Caco-2 (cell line): ENCODE measurements at regions of chr3 and their contacts with region 1.

Region 1: GRCh38 chr3:87350364-87351199 is 74.2 kb upstream of the POU1F1 start:
- DNase-seq: peak; percentile 22 to 36
- H3K4me3 ChIP-seq: no peak overlapping the region
- H3K4me3 Mint-ChIP-seq: no peak overlapping the region
- H3K27ac Mint-ChIP-seq: no peak overlapping the region
- H3K4me1 ChIP-seq: peaks cover 8% of the 10 kb centered on the region; the same call in 1 of the 2 replicates
- H3K4me1 Mint-ChIP-seq: peaks cover 7% of the 10 kb centered on the region
- H3K27me3 ChIP-seq: no peaks in the 10 kb centered on the region
- H3K27me3 Mint-ChIP-seq: no peaks in the 10 kb centered on the region
- CTCF ChIP-seq: peak; percentile 77 to 80

Region 2: GRCh38 chr3:87318617-87319021 is 32.0 kb before region 1 on chr3:
- CTCF ChIA-PET with region 1: no interaction called
- POLR2A ChIA-PET with region 1: no interaction called
- intact Hi-C with region 1: loop called (anchors 5 kb)
- DNase-seq: no peak
- H3K4me3 ChIP-seq: no peak overlapping the region
- H3K4me3 Mint-ChIP-seq: peak overlapping the region; percentile 37
- H3K27ac Mint-ChIP-seq: peak overlapping the region; percentile 61
- H3K4me1 ChIP-seq: peaks cover 48% of the 10 kb centered on the region
- H3K4me1 Mint-ChIP-seq: peaks cover 23% of the 10 kb centered on the region
- H3K27me3 ChIP-seq: no peaks in the 10 kb centered on the region
- H3K27me3 Mint-ChIP-seq: no peaks in the 10 kb centered on the region
- CTCF ChIP-seq: no peak

Region 3: DNA sequence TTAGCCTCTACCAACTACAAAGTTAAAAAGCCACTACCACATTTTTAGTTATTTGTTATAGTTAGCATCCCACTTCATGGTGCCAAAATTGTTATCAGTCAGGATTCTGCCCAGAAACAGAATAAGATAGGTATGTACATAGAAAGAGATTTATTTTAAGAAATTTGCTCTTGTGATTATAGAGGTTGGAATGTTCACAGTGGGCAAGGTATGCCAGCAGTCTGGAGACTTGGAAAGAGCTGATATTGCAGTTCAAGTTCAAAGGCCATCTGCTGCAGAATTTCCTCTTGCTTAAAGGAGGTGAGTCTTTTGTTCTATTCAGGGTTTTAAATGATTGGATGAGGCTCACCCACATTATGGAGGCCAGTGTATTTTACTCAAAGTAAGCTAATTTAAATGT is 69.6 kb after region 1 on chr3:
- CTCF ChIA-PET with region 1: no interaction called
- POLR2A ChIA-PET with region 1: no interaction called
- intact Hi-C with region 1: no loop called
- DNase-seq: no peak
- H3K4me3 ChIP-seq: no peak overlapping the region
- H3K4me3 Mint-ChIP-seq: no peak overlapping the region
- H3K27ac Mint-ChIP-seq: no peak overlapping the region
- H3K4me1 ChIP-seq: no peaks in the 10 kb centered on the region
- H3K4me1 Mint-ChIP-seq: no peaks in the 10 kb centered on the region
- H3K27me3 ChIP-seq: no peaks in the 10 kb centered on the region
- H3K27me3 Mint-ChIP-seq: no peaks in the 10 kb centered on the region
- CTCF ChIP-seq: no peak

Region 4: GRCh38 chr3:87468938-87469337 is 118.4 kb after region 1 on chr3:
- CTCF ChIA-PET with region 1: no interaction called
- POLR2A ChIA-PET with region 1: no interaction called
- intact Hi-C with region 1: no loop called
- DNase-seq: no peak
- H3K4me3 ChIP-seq: no peak overlapping the region
- H3K4me3 Mint-ChIP-seq: no peak overlapping the region
- H3K27ac Mint-ChIP-seq: no peak overlapping the region
- H3K4me1 ChIP-seq: no peaks in the 10 kb centered on the region
- H3K4me1 Mint-ChIP-seq: no peaks in the 10 kb centered on the region
- H3K27me3 ChIP-seq: no peaks in the 10 kb centered on the region
- H3K27me3 Mint-ChIP-seq: no peaks in the 10 kb centered on the region
- CTCF ChIP-seq: no peak

Region 5: DNA sequence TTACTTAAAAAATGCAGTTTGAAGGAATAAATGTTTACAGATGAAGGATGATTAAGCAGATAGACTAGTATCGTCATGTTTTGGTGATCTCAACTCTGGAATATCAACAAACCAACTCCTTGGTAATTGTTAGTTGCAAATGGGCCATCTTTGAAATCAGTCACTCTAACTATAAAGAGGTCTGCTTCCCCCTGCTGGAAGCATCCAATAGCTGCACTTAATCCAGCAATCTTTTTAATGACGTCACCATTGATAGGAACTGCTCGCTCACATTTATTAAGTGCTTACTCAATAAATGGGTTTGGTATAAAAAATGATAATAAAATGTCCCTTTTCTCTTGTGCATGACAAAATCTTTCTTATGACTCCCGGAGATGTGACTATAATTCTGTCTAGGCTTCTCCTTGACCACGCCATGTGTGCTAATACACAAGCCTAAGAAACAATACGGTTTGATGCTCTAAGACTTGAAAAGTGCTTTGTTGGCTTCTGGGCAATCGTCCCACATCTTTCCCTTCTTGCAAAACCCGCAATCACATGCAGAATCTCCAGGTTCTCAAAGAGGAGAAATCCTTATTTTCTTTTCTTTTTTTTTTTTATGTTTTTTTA is 153.4 kb after region 1 on chr3:
- CTCF ChIA-PET with region 1: interaction called, 5 read pairs
- POLR2A ChIA-PET with region 1: no interaction called
- intact Hi-C with region 1: loop called (anchors 1 kb)
- DNase-seq: peak in 1 of 2 experiments; percentile 57
- H3K4me3 ChIP-seq: no peak overlapping the region
- H3K4me3 Mint-ChIP-seq: no peak overlapping the region
- H3K27ac Mint-ChIP-seq: no peak overlapping the region
- H3K4me1 ChIP-seq: no peaks in the 10 kb centered on the region
- H3K4me1 Mint-ChIP-seq: no peaks in the 10 kb centered on the region
- H3K27me3 ChIP-seq: no peaks in the 10 kb centered on the region
- H3K27me3 Mint-ChIP-seq: no peaks in the 10 kb centered on the region
- CTCF ChIP-seq: peak; percentile 66 to 73

Region 6: DNA sequence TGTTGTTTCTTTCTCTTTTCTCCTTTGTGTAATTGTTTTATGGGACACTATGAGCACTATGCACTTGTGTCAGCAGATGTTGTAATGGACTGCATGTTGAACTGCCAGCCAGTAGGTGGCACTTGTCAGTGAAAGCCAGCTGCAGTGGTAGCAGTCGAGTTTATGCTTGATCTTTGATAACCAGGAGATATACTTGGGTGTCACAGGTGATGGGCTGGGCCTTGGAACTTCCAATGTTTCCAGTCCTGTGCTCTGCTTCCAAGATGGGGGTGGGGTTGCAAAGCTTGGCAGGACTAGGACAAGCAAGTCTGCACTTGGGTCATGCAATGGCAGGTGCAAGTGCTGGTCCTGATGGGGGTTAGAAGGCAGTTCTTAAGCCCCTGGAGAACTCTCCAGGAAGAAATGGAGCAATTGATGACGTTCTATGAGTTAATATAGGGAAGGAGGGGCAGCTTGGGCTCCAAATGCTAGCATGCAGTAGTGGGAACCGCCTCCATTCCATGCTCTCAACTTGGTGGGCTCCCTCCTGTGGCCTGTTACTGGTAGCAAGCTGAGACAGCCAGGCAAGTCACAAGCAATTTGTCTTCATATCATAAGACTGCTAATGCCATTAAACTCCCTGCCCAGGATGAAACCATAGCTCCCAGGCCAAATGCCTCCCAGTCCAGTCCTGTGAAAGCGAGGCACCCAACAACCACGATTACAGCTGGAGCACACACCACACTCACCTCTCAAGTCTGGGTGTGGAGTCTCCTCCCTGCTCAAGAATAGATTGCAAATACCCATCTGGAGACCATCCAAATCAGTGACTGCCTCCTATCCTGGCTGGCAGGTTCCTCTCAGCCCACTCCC is 421.0 kb after region 1 on chr3:
- CTCF ChIA-PET with region 1: no interaction called
- POLR2A ChIA-PET with region 1: no interaction called
- intact Hi-C with region 1: loop called (anchors 5 kb)
- DNase-seq: peak; percentile 45 to 46
- H3K4me3 ChIP-seq: no peak overlapping the region
- H3K4me3 Mint-ChIP-seq: no peak overlapping the region
- H3K27ac Mint-ChIP-seq: no peak overlapping the region
- H3K4me1 ChIP-seq: no peaks in the 10 kb centered on the region
- H3K4me1 Mint-ChIP-seq: no peaks in the 10 kb centered on the region
- H3K27me3 ChIP-seq: no peaks in the 10 kb centered on the region
- H3K27me3 Mint-ChIP-seq: peaks cover 6% of the 10 kb centered on the region
- CTCF ChIP-seq: peak; percentile 43 to 75

Region 7: DNA sequence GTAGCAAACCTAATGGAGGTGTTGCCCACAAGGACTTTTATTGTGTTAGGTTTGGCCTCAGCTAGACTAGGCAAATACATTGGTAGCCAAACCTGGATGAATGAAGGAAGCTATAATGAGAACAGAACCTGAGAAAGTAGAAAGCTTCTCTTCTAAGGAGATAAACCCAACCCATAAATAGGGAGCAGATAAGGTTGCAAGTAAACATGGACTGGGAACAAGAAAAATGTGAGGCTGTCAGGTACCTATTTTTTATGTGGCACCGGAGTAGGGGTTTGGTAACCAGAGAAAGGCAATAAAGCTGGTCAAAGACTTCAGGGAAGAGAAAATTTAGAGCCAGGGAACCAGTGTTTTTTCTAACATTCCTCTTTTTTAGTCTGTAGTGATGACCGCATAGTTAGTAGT is 733.5 kb after region 1 on chr3:
- CTCF ChIA-PET with region 1: no interaction called
- POLR2A ChIA-PET with region 1: no interaction called
- intact Hi-C with region 1: no loop called
- DNase-seq: no peak
- H3K4me3 ChIP-seq: no peak overlapping the region
- H3K4me3 Mint-ChIP-seq: no peak overlapping the region
- H3K27ac Mint-ChIP-seq: no peak overlapping the region
- H3K4me1 ChIP-seq: no peaks in the 10 kb centered on the region
- H3K4me1 Mint-ChIP-seq: peaks cover 6% of the 10 kb centered on the region
- H3K27me3 ChIP-seq: no peaks in the 10 kb centered on the region
- H3K27me3 Mint-ChIP-seq: no peaks in the 10 kb centered on the region
- CTCF ChIP-seq: no peak

Region 8: GRCh38 chr3:88180398-88180999 is 829.9 kb after region 1 on chr3:
- CTCF ChIA-PET with region 1: no interaction called
- POLR2A ChIA-PET with region 1: no interaction called
- intact Hi-C with region 1: loop called (anchors 5 kb)
- DNase-seq: peak in 1 of 2 experiments; percentile 22
- H3K4me3 ChIP-seq: no peak overlapping the region
- H3K4me3 Mint-ChIP-seq: no peak overlapping the region
- H3K27ac Mint-ChIP-seq: no peak overlapping the region
- H3K4me1 ChIP-seq: no peaks in the 10 kb centered on the region
- H3K4me1 Mint-ChIP-seq: no peaks in the 10 kb centered on the region
- H3K27me3 ChIP-seq: no peaks in the 10 kb centered on the region
- H3K27me3 Mint-ChIP-seq: peaks cover 2% of the 10 kb centered on the region
- CTCF ChIP-seq: peak in 1 of 2 experiments; percentile 38